Ascending aorta (tissue), 2 donors: ENCODE measurements at regions of chr19 and their contacts with region 1.

Region 1: DNA sequence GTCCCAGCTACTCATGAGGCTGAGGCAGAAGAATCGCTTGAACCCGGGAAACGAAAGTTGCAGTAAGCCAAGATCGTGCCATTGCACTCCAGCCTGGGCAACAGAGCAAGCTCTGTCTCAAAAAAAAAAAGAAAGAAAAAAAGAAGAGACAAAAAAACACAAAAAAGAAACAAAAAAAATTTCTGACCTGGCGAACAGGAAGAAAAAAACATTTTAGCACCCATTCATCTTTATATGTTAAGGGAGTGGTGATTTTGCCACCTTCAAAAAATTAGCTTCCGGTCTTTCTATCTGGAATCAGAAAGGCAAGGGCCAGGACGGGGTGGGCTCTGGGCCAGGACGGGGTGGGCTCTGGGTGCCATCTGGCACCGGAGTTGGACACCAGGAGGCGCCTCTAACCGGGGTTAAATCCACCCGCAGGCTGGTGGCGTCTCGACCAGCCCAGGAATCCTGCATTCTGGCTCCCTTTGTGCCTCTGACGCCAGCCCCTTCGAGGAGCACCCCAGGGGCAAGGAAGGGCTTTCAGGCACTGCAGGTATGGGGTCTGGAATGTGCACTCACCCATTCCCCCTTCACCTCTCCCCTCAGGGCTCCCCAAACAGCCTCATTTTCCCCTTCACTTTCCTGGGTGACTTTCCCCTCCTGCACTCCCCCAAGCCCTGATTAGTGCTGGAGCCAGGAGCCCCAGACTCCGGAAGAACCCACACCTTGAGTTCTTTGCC is 10.4 kb upstream of the ZSWIM4 start:
- DNase-seq: peak; percentile 28 to 87
- H3K4me3 ChIP-seq: no peak overlapping the region
- H3K27ac ChIP-seq: peak overlapping the region; percentile 76 to 94
- H3K4me1 ChIP-seq: peaks cover 25 to 53% of the 10 kb centered on the region in 2 donors
- H3K27me3 ChIP-seq: no peaks in the 10 kb centered on the region
- CTCF ChIP-seq: peak; percentile 72 to 83 (median 76)

Region 2: DNA sequence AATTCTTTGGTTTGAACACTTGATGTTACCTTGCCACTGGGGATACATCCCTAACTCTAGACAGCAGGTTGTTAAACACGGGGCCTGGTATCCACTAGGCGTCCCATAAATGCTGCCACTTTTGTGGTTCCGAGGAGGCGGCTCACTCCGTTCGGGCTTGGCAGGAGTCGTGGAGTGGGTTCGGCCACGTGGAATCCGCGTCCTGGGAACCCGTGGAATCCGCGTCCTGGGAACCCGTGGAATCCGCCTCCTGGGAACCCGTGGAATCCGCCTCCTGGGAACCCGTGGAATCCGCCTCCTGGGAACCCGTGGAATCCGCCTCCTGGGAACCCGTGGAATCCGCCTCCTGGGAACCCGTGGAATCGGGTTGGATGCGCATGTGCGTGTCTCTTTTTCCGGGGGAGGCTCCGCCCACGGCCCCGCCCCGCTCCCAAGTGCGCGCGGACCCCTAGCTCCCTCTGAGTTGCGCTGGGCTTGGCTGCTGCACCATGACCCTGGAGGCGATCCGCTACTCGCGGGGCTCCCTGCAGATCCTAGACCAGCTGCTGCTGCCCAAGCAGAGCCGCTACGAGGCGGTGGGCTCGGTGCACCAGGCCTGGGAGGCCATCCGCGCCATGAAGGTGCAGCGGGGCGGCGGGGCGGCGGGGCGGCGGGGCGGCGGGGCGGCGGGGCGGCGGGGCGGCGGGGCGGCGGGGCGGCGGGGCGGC is 20.6 kb before region 1 on chr19 and contains the start of gene MRI1:
- intact Hi-C with region 1: loop called (anchors 2 kb)
- DNase-seq: peak in 1 of 2 donors; percentile 88
- H3K4me3 ChIP-seq: peak within 1 kb of the TSS; percentile 86 to 90
- H3K27ac ChIP-seq: peak within 1 kb of the TSS; percentile 73 to 74
- H3K4me1 ChIP-seq: peaks cover 4 to 9% of the 10 kb centered on the region in 2 donors
- H3K27me3 ChIP-seq: no peaks in the 10 kb centered on the region
- CTCF ChIP-seq: no peak
- total RNA-seq, gene MRI1: 89.9 TPM